ENCODE measurements at regions of chr20 and their contacts with region 1.

Region 1: GRCh38 chr20:8640461-8640860 is 428.4 kb upstream of the PLCB4 start:
- DNase-seq: no peak
- H3K4me3 Mint-ChIP-seq: no peak overlapping the region
- H3K27ac Mint-ChIP-seq: no peak overlapping the region
- H3K4me1 Mint-ChIP-seq: peaks cover 19% of the 10 kb centered on the region
- H3K27me3 Mint-ChIP-seq: no peaks in the 10 kb centered on the region
- CTCF ChIP-seq: no peak

Region 2: GRCh38 chr20:8557711-8558110 is 82.8 kb before region 1 on chr20:
- CTCF ChIA-PET with region 1: no interaction called
- POLR2A ChIA-PET with region 1: no interaction called
- intact Hi-C with region 1: no loop called
- DNase-seq: no peak
- H3K4me3 Mint-ChIP-seq: no peak overlapping the region
- H3K27ac Mint-ChIP-seq: no peak overlapping the region
- H3K4me1 Mint-ChIP-seq: no peaks in the 10 kb centered on the region
- H3K27me3 Mint-ChIP-seq: no peaks in the 10 kb centered on the region
- CTCF ChIP-seq: no peak

Region 3: GRCh38 chr20:8571611-8572010 is 68.8 kb before region 1 on chr20:
- CTCF ChIA-PET with region 1: no interaction called
- POLR2A ChIA-PET with region 1: no interaction called
- intact Hi-C with region 1: no loop called
- DNase-seq: no peak
- H3K4me3 Mint-ChIP-seq: no peak overlapping the region
- H3K27ac Mint-ChIP-seq: no peak overlapping the region
- H3K4me1 Mint-ChIP-seq: peaks cover 5% of the 10 kb centered on the region
- H3K27me3 Mint-ChIP-seq: no peaks in the 10 kb centered on the region
- CTCF ChIP-seq: no peak

Region 4: GRCh38 chr20:8616792-8617191 is 23.7 kb before region 1 on chr20:
- CTCF ChIA-PET with region 1: interaction called, 4 read pairs
- POLR2A ChIA-PET with region 1: no interaction called
- intact Hi-C with region 1: loop called (anchors 1 kb)
- DNase-seq: no peak
- H3K4me3 Mint-ChIP-seq: no peak overlapping the region
- H3K27ac Mint-ChIP-seq: no peak overlapping the region
- H3K4me1 Mint-ChIP-seq: no peaks in the 10 kb centered on the region
- H3K27me3 Mint-ChIP-seq: no peaks in the 10 kb centered on the region
- CTCF ChIP-seq: no peak